CD14-positive monocyte (primary cell): ENCODE measurements at regions of chr3 and their contacts with region 1.

Region 1: GRCh38 chr3:172511783-172512762 is 11.2 kb downstream of the TNFSF10 start:
- DNase-seq: peak; percentile 82 to 86 (median 84)
- H3K4me3 ChIP-seq: peak overlapping the region in 1 of 3 experiments; percentile 60
- H3K4me3 Mint-ChIP-seq: peak overlapping the region; percentile 25 to 52
- H3K27ac ChIP-seq: peak overlapping the region; percentile 58 to 84
- H3K27ac Mint-ChIP-seq: peak overlapping the region; percentile 80 to 96 (median 90)
- H3K4me1 ChIP-seq: peaks cover 64 to 65% of the 10 kb centered on the region in 2 donors
- H3K4me1 Mint-ChIP-seq: peaks cover 63% of the 10 kb centered on the region
- H3K27me3 ChIP-seq: no peaks in the 10 kb centered on the region
- H3K27me3 Mint-ChIP-seq: no peaks in the 10 kb centered on the region
- CTCF ChIP-seq: no peak

Region 2: DNA sequence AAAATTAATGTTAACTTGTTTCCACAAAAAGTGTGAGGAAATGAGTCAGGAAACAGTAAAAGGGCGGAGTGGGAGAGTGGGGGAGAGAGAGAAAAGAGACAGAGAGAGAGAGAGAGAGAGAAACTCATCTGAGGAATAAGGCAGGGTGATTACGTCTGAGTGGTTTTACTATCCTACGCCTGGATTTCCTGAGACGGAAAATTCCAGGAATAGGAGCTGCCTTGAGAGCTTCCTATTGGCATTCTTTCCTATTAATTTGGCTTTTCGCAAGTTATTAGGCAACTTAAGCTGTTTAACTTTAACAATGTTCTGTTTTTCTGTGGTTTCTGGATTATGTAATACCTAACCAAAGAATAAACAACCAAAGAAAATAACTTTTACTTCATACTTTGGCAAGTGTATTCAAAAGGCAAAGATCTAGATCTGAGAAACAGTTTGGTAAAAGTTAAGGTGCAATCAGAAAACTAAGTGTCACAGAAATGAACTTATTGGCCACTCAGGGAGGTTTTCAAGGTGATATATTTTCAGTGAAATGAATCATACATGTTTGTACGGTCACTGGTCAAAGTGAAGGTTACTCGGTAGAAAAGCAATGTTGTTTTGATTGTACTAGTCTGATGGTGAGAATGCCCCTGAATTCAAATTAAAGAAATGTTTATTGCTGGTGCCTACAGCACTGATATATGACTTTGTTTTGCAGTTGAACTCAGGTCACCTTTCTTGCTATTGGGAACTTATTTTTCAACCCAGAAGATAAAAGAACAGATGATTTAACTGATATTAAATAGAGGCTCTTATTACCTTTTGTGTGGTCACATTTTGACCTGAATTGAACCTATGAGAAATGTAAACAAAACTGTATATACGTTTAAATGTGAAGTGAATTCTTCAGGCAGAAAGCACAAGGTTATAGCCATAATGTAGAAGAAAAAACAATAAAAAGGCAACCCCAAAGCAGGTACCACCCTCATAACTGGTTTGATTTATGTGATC is 51.1 kb after region 1 on chr3:
- intact Hi-C with region 1: loop called in 1 of 2 experiments (anchors 10 kb)
- DNase-seq: peak; percentile 52 to 74 (median 63)
- H3K4me3 ChIP-seq: peak overlapping the region; percentile 37 to 72 (median 71)
- H3K4me3 Mint-ChIP-seq: peak overlapping the region; percentile 70 to 85
- H3K27ac ChIP-seq: peak overlapping the region; percentile 79 to 95
- H3K27ac Mint-ChIP-seq: peak overlapping the region; percentile 93 to 99 (median 97)
- H3K4me1 ChIP-seq: peaks cover 74 to 91% of the 10 kb centered on the region in 2 donors
- H3K4me1 Mint-ChIP-seq: peaks cover 66% of the 10 kb centered on the region
- H3K27me3 ChIP-seq: no peaks in the 10 kb centered on the region
- H3K27me3 Mint-ChIP-seq: no peaks in the 10 kb centered on the region
- CTCF ChIP-seq: no peak

Region 3: GRCh38 chr3:172799251-172799650 is 287.2 kb after region 1 on chr3:
- intact Hi-C with region 1: no loop called
- DNase-seq: no peak
- H3K4me3 ChIP-seq: no peak overlapping the region
- H3K4me3 Mint-ChIP-seq: no peak overlapping the region
- H3K27ac ChIP-seq: no peak overlapping the region
- H3K27ac Mint-ChIP-seq: peak overlapping the region in 1 of 7 donors; percentile 30
- H3K4me1 ChIP-seq: no peaks in the 10 kb centered on the region
- H3K4me1 Mint-ChIP-seq: no peaks in the 10 kb centered on the region
- H3K27me3 ChIP-seq: no peaks in the 10 kb centered on the region
- H3K27me3 Mint-ChIP-seq: no peaks in the 10 kb centered on the region
- CTCF ChIP-seq: no peak